ENCODE measurements at regions of chr11 and their contacts with region 1.

Region 1: GRCh38 chr11:65859200-65859811 is 927 bp upstream of the MUS81 start:
- DNase-seq: peak; percentile 89 to 100 (median 95)
- ATAC-seq: peak; percentile 64 to 65
- H3K4me3 Mint-ChIP-seq: peak overlapping the region; percentile 91 to 99 (median 96)
- H3K27ac Mint-ChIP-seq: peak overlapping the region; percentile 93 to 99 (median 96)
- H3K4me1 Mint-ChIP-seq: peaks cover 32 to 56% (median 52%) of the 10 kb centered on the region in 4 donors
- H3K27me3 Mint-ChIP-seq: no peaks in the 10 kb centered on the region

Region 2: GRCh38 chr11:65662799-65663638 is 196.3 kb before region 1 on chr11 and contains the start of gene RELA:
- POLR2A ChIA-PET with region 1: interaction called, 10 read pairs
- DNase-seq: peak; percentile 85 to 95 (median 88)
- ATAC-seq: peak; percentile 80 to 84
- H3K4me3 Mint-ChIP-seq: peak within 1 kb of the TSS; percentile 86 to 93 (median 88)
- H3K27ac Mint-ChIP-seq: peak within 1 kb of the TSS; percentile 91 to 98 (median 95)
- H3K4me1 Mint-ChIP-seq: peaks cover 16 to 47% (median 36%) of the 10 kb centered on the region in 4 donors
- H3K27me3 Mint-ChIP-seq: no peaks in the 10 kb centered on the region
- polyA plus RNA-seq, gene RELA: 38.4 to 69.8 (median 56.6) TPM

Region 3: GRCh38 chr11:65695456-65696241 is 163.7 kb before region 1 on chr11:
- POLR2A ChIA-PET with region 1: no interaction called
- DNase-seq: no peak
- ATAC-seq: no peak
- H3K4me3 Mint-ChIP-seq: no peak overlapping the region
- H3K27ac Mint-ChIP-seq: peak overlapping the region in 1 of 10 donors; percentile 25
- H3K4me1 Mint-ChIP-seq: peaks cover 0 to 10% (median 0%) of the 10 kb centered on the region in 4 donors
- H3K27me3 Mint-ChIP-seq: no peaks in the 10 kb centered on the region

Region 4: GRCh38 chr11:65720237-65720934 is 138.9 kb before region 1 on chr11 and contains the start of gene RNASEH2C:
- POLR2A ChIA-PET with region 1: interaction called, 10 read pairs
- DNase-seq: peak; percentile 57 to 80 (median 70)
- ATAC-seq: peak; percentile 90 to 95
- H3K4me3 Mint-ChIP-seq: peak within 1 kb of the TSS; percentile 80 to 95 (median 92)
- H3K27ac Mint-ChIP-seq: peak within 1 kb of the TSS; percentile 19 to 95 (median 93)
- H3K4me1 Mint-ChIP-seq: peaks cover 17 to 42% (median 37%) of the 10 kb centered on the region in 4 donors
- H3K27me3 Mint-ChIP-seq: peaks cover 0 to 1% (median 0%) of the 10 kb centered on the region in 5 donors
- polyA plus RNA-seq, gene RNASEH2C: 73.4 to 99.0 (median 98.2) TPM

Region 5: DNA sequence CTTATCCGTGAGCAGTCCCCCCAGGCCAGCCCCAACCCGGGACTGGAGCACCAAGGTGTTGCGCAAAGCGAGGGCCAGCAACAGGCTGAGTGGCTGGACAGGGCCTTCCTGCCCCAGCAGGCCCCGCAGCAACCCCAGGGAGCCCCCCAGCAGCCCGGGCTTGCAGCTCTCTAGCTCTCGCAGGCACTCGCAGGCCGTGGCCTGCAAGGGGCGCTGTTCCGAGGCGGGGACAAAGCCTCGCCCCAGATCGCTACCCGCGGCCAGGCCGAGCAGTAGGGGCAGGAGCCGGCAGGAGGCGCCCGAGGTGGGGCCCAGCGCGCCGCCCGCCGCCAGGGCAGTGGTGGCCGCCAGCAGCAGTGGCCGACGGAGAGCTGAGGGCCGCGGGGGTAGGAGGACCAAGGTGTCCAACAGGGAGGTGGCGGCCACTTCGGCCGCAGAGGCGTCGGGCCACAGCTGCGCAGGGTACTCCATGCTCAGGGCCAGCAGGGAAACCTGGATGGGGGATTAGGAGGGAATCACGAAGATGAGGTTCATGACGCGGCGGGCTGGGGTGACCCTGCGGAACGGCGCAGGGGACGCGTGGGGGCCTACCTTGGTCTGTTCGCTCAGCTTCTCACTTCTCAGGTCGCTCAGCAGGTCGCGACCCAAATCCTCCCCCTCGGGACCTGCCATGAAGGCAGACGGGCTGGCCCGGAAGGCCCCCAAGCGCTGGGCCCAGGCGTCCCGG is 79.3 kb before region 1 on chr11:
- POLR2A ChIA-PET with region 1: no interaction called
- DNase-seq: peak; percentile 65 to 81 (median 76)
- ATAC-seq: peak; percentile 62 to 74
- H3K4me3 Mint-ChIP-seq: peak overlapping the region; percentile 77 to 91 (median 83)
- H3K27ac Mint-ChIP-seq: peak overlapping the region in 9 of 10 donors; percentile 12 to 83 (median 68)
- H3K4me1 Mint-ChIP-seq: peaks cover 7 to 19% (median 17%) of the 10 kb centered on the region in 4 donors
- H3K27me3 Mint-ChIP-seq: peaks cover 0 to 7% (median 2%) of the 10 kb centered on the region in 5 donors

Region 6: DNA sequence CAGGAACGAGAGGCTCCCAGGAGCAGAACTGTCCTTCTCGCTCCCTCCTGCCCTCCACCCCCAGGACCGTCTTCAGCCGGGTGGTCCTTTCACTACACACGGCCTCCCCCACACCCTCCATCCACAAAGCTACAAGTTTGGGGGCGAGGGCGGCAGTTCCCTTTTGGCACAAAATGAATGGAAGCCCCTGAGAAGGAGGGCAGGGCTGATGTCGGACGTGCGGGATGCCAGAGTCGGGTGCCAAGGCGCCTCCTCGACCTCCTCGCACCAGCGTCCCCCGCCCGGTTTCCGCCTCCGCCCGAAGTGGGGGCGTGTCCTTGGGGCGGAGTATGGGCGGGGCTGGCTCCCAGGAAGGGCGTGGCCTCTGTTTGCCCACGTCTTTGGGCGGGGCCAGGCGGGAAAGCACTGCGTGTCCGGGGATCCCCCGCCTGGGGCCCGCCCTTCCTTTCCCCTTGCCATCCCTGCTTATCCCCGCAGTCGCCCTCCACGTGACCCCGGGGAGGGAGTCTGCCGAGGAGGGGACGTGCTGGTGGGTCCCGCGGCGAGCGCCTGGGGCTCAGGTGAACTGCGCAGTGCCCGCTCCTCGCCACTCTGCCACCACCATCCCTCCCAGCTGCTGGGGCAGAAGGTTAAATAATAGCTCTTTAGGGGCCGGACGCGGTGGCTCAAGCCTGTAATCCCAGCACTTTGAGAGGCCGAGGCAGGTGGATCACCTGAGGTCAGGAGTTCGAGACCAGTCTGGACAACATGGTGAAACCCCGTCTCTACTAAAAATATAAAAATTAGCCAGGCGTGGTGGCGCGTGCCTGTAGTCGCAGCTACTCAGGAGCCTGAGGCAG is 14.2 kb after region 1 on chr11:
- POLR2A ChIA-PET with region 1: interaction called, 405 read pairs
- DNase-seq: peak; percentile 90 to 100 (median 97)
- ATAC-seq: peak; percentile 83 to 92
- H3K4me3 Mint-ChIP-seq: peak overlapping the region; percentile 82 to 94 (median 90)
- H3K27ac Mint-ChIP-seq: peak overlapping the region; percentile 83 to 97 (median 94)
- H3K4me1 Mint-ChIP-seq: peaks cover 21 to 59% (median 45%) of the 10 kb centered on the region in 4 donors
- H3K27me3 Mint-ChIP-seq: no peaks in the 10 kb centered on the region

Region 7: GRCh38 chr11:65900125-65900898 is 41.0 kb after region 1 on chr11 and contains the start of gene FOSL1:
- POLR2A ChIA-PET with region 1: interaction called, 17 read pairs
- DNase-seq: peak; percentile 85 to 95 (median 91)
- ATAC-seq: peak; percentile 93 to 98
- H3K4me3 Mint-ChIP-seq: peak within 1 kb of the TSS; percentile 57 to 80 (median 74)
- H3K27ac Mint-ChIP-seq: peak within 1 kb of the TSS in 9 of 10 donors; percentile 41 to 94 (median 72)
- H3K4me1 Mint-ChIP-seq: peaks cover 2 to 24% (median 10%) of the 10 kb centered on the region in 4 donors
- H3K27me3 Mint-ChIP-seq: peaks cover 0 to 4% (median 0%) of the 10 kb centered on the region in 5 donors
- polyA plus RNA-seq, gene FOSL1: 0.17 to 0.22 TPM in 2 of 3 donors, not detected in the other

Region 8: DNA sequence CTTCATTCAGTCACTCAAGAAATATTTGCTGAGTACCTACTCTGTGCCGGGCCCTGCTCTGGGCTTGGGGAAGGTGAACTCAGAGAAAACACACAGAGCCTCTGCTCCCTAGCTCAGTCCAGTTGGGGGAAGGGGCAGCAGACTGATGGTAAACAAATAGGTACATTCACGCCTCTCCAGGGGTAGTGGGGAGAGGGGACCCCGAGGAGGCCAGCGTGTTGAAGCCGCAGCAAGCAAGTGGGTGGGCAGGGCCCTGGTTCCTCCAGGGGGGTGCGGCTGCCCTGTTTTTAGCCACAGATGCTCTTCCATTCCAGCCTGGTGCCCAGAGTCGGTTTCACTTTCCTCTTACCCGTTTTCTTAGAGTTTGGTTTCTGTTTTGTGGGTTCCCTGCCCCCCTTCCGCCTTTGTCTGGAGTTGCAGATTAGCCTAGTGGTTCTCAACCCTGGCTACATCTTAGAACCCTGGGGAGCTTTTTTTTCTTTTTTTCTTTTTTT is 68.6 kb after region 1 on chr11:
- POLR2A ChIA-PET with region 1: interaction called, 18 read pairs
- DNase-seq: peak; percentile 49 to 90 (median 77)
- ATAC-seq: peak; percentile 92 to 96
- H3K4me3 Mint-ChIP-seq: peak overlapping the region; percentile 65 to 86 (median 74)
- H3K27ac Mint-ChIP-seq: peak overlapping the region; percentile 88 to 99 (median 97)
- H3K4me1 Mint-ChIP-seq: peaks cover 23 to 61% (median 48%) of the 10 kb centered on the region in 4 donors
- H3K27me3 Mint-ChIP-seq: no peaks in the 10 kb centered on the region

Region 9: GRCh38 chr11:66001942-66002647 is 142.8 kb after region 1 on chr11 and contains the starts of genes BANF1 and EIF1AD:
- POLR2A ChIA-PET with region 1: interaction called, 30 read pairs
- DNase-seq: peak; percentile 69 to 99 (median 94)
- ATAC-seq: peak; percentile 79 to 88
- H3K4me3 Mint-ChIP-seq: peak within 1 kb of the TSS; percentile 98 to 100 (median 99)
- H3K27ac Mint-ChIP-seq: peak within 1 kb of the TSS; percentile 98 to 100 (median 99)
- H3K4me1 Mint-ChIP-seq: peaks cover 17 to 54% (median 48%) of the 10 kb centered on the region in 4 donors
- H3K27me3 Mint-ChIP-seq: no peaks in the 10 kb centered on the region
- polyA plus RNA-seq, gene BANF1: 225 to 250 (median 241) TPM
- polyA plus RNA-seq, gene EIF1AD: 11.5 to 18.7 (median 14.3) TPM

Region 10: GRCh38 chr11:66081505-66081904 is 222.2 kb after region 1 on chr11:
- POLR2A ChIA-PET with region 1: no interaction called
- DNase-seq: peak; percentile 53 to 90 (median 77)
- ATAC-seq: peak; percentile 86 to 98
- H3K4me3 Mint-ChIP-seq: peak overlapping the region; percentile 75 to 94 (median 90)
- H3K27ac Mint-ChIP-seq: peak overlapping the region; percentile 93 to 100 (median 98)
- H3K4me1 Mint-ChIP-seq: peaks cover 46 to 97% (median 92%) of the 10 kb centered on the region in 4 donors
- H3K27me3 Mint-ChIP-seq: no peaks in the 10 kb centered on the region

Measured in naive thymus-derived CD8-positive, alpha-beta T cell (primary cell).